Activated CD4-positive, alpha-beta T cell treated with anti-CD3 and anti-CD28 coated beads for 36 hours (primary cell): ENCODE measurements at regions of chr11 and their contacts with region 1.

Region 1: GRCh38 chr11:62652161-62653006 is 718 bp downstream of the INTS5 start:
- DNase-seq: no peak
- ATAC-seq: no peak
- H3K4me3 Mint-ChIP-seq: peak overlapping the region; percentile 88
- H3K27ac Mint-ChIP-seq: peak overlapping the region; percentile 91
- H3K4me1 Mint-ChIP-seq: peaks cover 23% of the 10 kb centered on the region
- H3K27me3 Mint-ChIP-seq: no peaks in the 10 kb centered on the region

Region 2: GRCh38 chr11:62621567-62622470 is 30.6 kb before region 1 on chr11 and contains the start of gene B3GAT3:
- CTCF ChIA-PET with region 1: interaction called, 5 read pairs
- POLR2A ChIA-PET with region 1: interaction called, 8 read pairs
- intact Hi-C with region 1: loop called in 1 of 2 experiments (anchors 1 kb)
- DNase-seq: peak; percentile 97
- ATAC-seq: peak; percentile 94
- H3K4me3 Mint-ChIP-seq: peak within 1 kb of the TSS; percentile 92
- H3K27ac Mint-ChIP-seq: peak within 1 kb of the TSS; percentile 94
- H3K4me1 Mint-ChIP-seq: peaks cover 29% of the 10 kb centered on the region
- H3K27me3 Mint-ChIP-seq: no peaks in the 10 kb centered on the region
- total RNA-seq, gene B3GAT3: 48.7 to 57.5 TPM